Activated naive CD4-positive, alpha-beta T cell treated with anti-CD3 and anti-CD28 coated beads for 36 hours (primary cell): ENCODE measurements at regions of chr9 and their contacts with region 1.

Region 1: DNA sequence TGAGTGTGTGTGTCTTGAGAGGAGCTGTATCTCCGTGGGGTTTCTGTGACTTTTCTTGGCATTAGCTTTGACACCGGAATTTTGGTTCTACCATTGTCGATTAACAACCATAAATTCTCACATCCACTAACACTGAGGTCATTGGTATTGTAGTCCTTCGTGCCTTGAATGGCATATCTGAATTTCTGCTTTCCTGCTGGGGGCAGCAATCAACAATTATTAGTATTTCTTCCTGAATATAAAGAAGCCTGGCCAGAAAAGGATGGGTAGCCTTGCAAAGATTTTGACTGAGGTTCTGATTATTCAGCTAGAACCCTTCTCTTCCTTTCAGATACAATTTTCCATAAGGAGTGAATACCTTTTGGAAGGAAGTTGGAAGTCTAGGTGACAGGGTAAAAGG is 33.5 kb upstream of the SHOC1 start:
- DNase-seq: no peak
- H3K4me3 Mint-ChIP-seq: no peak overlapping the region
- H3K27ac Mint-ChIP-seq: no peak overlapping the region
- H3K4me1 Mint-ChIP-seq: no peaks in the 10 kb centered on the region
- H3K27me3 Mint-ChIP-seq: no peaks in the 10 kb centered on the region

Region 2: GRCh38 chr9:111423389-111423788 is 404.8 kb before region 1 on chr9:
- CTCF ChIA-PET with region 1: no interaction called
- intact Hi-C with region 1: no loop called
- DNase-seq: no peak
- H3K4me3 Mint-ChIP-seq: no peak overlapping the region
- H3K27ac Mint-ChIP-seq: no peak overlapping the region
- H3K4me1 Mint-ChIP-seq: peaks cover 9% of the 10 kb centered on the region
- H3K27me3 Mint-ChIP-seq: no peaks in the 10 kb centered on the region

Region 3: DNA sequence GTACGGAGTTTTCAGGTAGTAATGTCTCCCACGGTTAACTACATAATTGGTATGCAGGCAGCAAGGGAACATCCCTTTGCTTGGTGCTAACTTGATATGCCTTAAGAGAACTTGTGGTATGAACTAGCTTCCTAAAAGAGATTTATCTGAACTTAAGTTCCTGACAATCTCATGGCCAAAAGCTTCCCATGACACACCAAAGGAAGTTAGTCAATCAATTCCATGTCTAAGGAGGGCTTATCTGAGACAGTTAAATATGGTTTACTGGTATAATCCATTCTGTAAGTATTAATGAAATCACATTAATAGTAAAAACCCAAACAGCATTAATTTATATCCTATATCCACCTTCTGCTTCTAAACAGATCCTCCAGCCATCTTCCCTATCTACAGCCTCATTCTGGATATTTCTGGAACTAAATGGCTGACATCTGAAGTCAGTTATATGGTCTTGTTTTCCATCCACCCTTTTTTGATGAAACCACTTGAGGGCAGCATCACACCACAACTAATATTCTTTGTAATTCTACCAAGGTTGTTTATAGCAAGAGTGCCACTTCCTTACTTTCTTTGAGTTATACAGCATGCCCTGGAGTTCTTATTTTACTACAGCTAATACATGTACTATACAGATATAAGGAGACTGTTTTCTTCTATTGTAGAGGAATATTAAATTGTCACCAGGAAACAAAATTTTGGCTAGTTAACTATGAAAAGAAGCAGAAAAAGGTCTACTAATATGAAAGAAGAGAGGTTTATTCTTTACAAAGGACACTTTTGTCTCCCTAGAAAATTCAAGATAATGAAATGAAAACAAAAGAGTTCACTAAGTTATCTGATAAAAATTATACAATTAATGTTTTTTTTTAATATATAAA is 68.2 kb before region 1 on chr9:
- CTCF ChIA-PET with region 1: no interaction called
- intact Hi-C with region 1: loop called (anchors 2 kb)
- DNase-seq: peak; percentile 71
- H3K4me3 Mint-ChIP-seq: no peak overlapping the region
- H3K27ac Mint-ChIP-seq: no peak overlapping the region
- H3K4me1 Mint-ChIP-seq: peaks cover 4% of the 10 kb centered on the region
- H3K27me3 Mint-ChIP-seq: no peaks in the 10 kb centered on the region

Region 4: GRCh38 chr9:111805830-111806241 is 22.4 kb before region 1 on chr9:
- CTCF ChIA-PET with region 1: interaction called, 3 read pairs
- intact Hi-C with region 1: loop called (anchors 2 kb)
- DNase-seq: no peak
- H3K4me3 Mint-ChIP-seq: no peak overlapping the region
- H3K27ac Mint-ChIP-seq: no peak overlapping the region
- H3K4me1 Mint-ChIP-seq: peaks cover 32% of the 10 kb centered on the region
- H3K27me3 Mint-ChIP-seq: no peaks in the 10 kb centered on the region

Region 5: GRCh38 chr9:111851566-111851965 is 23.4 kb after region 1 on chr9:
- CTCF ChIA-PET with region 1: no interaction called
- intact Hi-C with region 1: no loop called
- DNase-seq: no peak
- H3K4me3 Mint-ChIP-seq: no peak overlapping the region
- H3K27ac Mint-ChIP-seq: no peak overlapping the region
- H3K4me1 Mint-ChIP-seq: no peaks in the 10 kb centered on the region
- H3K27me3 Mint-ChIP-seq: no peaks in the 10 kb centered on the region

Region 6: GRCh38 chr9:111975709-111976108 is 147.5 kb after region 1 on chr9:
- CTCF ChIA-PET with region 1: interaction called, 5 read pairs
- intact Hi-C with region 1: loop called (anchors 5 kb)
- DNase-seq: peak; percentile 55
- H3K4me3 Mint-ChIP-seq: no peak overlapping the region
- H3K27ac Mint-ChIP-seq: no peak overlapping the region
- H3K4me1 Mint-ChIP-seq: peaks cover 8% of the 10 kb centered on the region
- H3K27me3 Mint-ChIP-seq: no peaks in the 10 kb centered on the region